Heart left ventricle (tissue), 16 donors: ENCODE measurements at regions of chr9 and their contacts with region 1.

Region 1: GRCh38 chr9:37119907-37120842 is at the start of gene ZCCHC7:
- DNase-seq: peak; percentile 96 to 98 (median 97)
- ATAC-seq: peak; percentile 99 to 100 (median 99)
- H3K4me3 ChIP-seq: peak within 1 kb of the TSS; percentile 65 to 99 (median 90)
- H3K27ac ChIP-seq: peak within 1 kb of the TSS; percentile 70 to 96 (median 90)
- H3K4me1 ChIP-seq: peaks cover 3 to 26% (median 17%) of the 10 kb centered on the region in 12 donors
- H3K27me3 ChIP-seq: no peaks in the 10 kb centered on the region
- CTCF ChIP-seq: no peak
- POLR2A ChIP-seq: peak; percentile 22 to 72
- total RNA-seq, gene ZCCHC7: 4.4 to 14.8 (median 9.1) TPM

Region 2: GRCh38 chr9:37053684-37054362 is 66.4 kb before region 1 on chr9:
- intact Hi-C with region 1: loop called in 1 of 10 experiments (anchors 10 kb)
- DNase-seq: no peak
- ATAC-seq: no peak
- H3K4me3 ChIP-seq: no peak overlapping the region
- H3K27ac ChIP-seq: no peak overlapping the region
- H3K4me1 ChIP-seq: no peaks in the 10 kb centered on the region
- H3K27me3 ChIP-seq: peaks cover 0 to 74% (median 21%) of the 10 kb centered on the region in 9 donors
- CTCF ChIP-seq: no peak
- POLR2A ChIP-seq: no peak

Region 3: GRCh38 chr9:37066139-37066725 is 53.9 kb before region 1 on chr9:
- intact Hi-C with region 1: no loop called
- DNase-seq: no peak
- ATAC-seq: no peak
- H3K4me3 ChIP-seq: no peak overlapping the region
- H3K27ac ChIP-seq: no peak overlapping the region
- H3K4me1 ChIP-seq: no peaks in the 10 kb centered on the region
- H3K27me3 ChIP-seq: peaks cover 0 to 45% (median 15%) of the 10 kb centered on the region in 9 donors
- CTCF ChIP-seq: no peak
- POLR2A ChIP-seq: no peak

Region 4: GRCh38 chr9:37079370-37080164 is 40.6 kb before region 1 on chr9:
- intact Hi-C with region 1: loop called in 5 of 10 experiments (anchors 2 to 5 kb)
- DNase-seq: peak; percentile 92 to 95 (median 95)
- ATAC-seq: peak; percentile 99
- H3K4me3 ChIP-seq: peak overlapping the region; percentile 64 to 98 (median 86)
- H3K27ac ChIP-seq: peak overlapping the region; percentile 31 to 92 (median 84)
- H3K4me1 ChIP-seq: peaks cover 0 to 44% (median 15%) of the 10 kb centered on the region in 12 donors
- H3K27me3 ChIP-seq: peaks cover 0 to 6% (median 0%) of the 10 kb centered on the region in 9 donors
- CTCF ChIP-seq: no peak
- POLR2A ChIP-seq: peak in 1 of 2 donors; percentile 46